ENCODE measurements at regions of chr14 and their contacts with region 1.

Region 1: DNA sequence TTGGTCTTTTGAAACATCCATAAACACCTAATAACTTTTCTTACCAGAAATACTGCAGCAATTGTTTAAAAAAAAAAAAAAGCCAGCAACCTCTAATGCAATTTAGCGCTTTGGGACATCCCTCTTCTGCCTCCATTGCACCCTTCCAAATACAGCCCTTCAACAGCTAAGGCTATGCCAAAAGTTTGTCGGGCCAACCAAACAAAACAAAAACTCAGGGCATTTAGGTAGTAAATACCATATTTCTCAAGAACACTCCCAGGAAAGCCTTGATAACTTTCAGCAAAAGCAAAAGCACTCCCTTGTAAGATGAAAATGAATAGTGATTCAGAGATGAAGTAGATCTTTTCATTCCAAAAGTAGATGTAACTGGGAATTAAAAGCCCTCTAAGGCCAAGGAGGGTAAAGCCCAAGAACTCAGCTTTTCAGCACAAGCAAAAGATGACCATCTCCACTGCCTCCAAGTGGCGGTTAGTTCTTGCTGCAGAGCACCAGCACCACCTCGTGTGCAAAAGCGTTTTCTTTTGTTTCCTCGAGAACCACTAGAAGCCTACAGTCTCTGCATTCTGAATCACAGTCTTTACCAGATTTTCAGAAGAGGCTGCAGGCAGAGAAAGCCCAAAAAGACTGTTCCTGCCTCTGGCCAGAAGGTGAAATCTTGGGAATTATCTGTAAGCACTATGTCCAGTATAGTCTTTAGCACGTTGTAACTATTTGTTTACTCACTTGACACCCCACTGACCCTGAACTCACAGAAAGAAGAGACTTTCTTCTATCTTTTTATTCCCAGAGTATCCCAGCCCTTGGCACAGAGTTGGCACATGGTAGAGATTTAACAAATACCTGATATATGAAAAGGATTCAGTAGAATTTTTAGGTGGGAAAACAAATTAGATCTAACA is 53.1 kb downstream of the SIX6 start:
- DNase-seq: peak; percentile 71
- H3K4me3 Mint-ChIP-seq: no peak overlapping the region
- H3K27ac Mint-ChIP-seq: no peak overlapping the region
- H3K4me1 Mint-ChIP-seq: no peaks in the 10 kb centered on the region
- H3K27me3 Mint-ChIP-seq: no peaks in the 10 kb centered on the region
- CTCF ChIP-seq: peak; percentile 61

Region 2: GRCh38 chr14:60064491-60065072 is 497.5 kb before region 1 on chr14:
- CTCF ChIA-PET with region 1: interaction called, 3 read pairs
- POLR2A ChIA-PET with region 1: no interaction called
- intact Hi-C with region 1: loop called (anchors 5 kb)
- DNase-seq: peak; percentile 44
- H3K4me3 Mint-ChIP-seq: no peak overlapping the region
- H3K27ac Mint-ChIP-seq: no peak overlapping the region
- H3K4me1 Mint-ChIP-seq: peaks cover 8% of the 10 kb centered on the region
- H3K27me3 Mint-ChIP-seq: no peaks in the 10 kb centered on the region
- CTCF ChIP-seq: peak; percentile 53

Region 3: DNA sequence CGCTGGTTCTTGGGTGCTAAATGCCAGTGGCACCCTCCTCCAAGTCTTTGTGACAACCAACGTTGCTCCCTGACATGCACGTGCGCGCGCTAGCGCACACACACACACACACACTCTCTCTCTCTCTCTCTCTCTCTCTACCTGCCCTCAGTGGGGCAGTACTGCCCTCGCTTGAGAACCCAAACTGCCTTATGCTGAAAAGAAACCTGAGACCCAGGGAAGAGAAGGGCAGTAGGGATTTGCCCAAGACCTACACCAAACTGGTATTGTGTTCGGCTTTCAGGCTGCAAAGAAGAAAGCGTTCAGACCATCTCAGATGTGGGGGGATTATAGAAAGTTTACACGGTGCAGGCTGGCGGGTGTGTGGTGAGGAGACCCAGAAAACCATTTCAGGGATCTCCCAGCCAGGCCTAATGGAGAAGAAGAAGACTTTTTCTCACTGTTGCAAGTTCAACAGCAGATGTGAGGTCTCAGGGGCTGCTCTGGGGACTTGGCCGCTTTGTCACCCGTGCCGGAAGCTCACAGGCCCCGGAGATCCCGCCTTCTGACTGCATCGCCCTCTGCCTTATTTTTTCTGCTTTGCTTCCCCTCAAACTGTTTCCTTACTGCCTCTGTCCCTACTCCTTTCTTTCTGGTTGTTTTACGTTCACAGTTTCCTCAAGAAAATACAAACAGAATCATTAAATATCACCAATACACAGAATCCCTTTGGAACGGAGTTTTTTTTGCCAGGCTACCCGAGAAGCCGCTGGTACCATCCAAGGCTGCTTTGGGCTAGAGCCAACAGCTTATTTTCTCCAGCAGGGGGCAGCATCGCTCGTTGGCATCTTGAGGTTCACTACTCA is 230.7 kb before region 1 on chr14:
- CTCF ChIA-PET with region 1: interaction called, 9 read pairs
- POLR2A ChIA-PET with region 1: no interaction called
- intact Hi-C with region 1: loop called (anchors 5 kb)
- DNase-seq: peak; percentile 71
- H3K4me3 Mint-ChIP-seq: peak overlapping the region; percentile 66
- H3K27ac Mint-ChIP-seq: no peak overlapping the region
- H3K4me1 Mint-ChIP-seq: peaks cover 17% of the 10 kb centered on the region
- H3K27me3 Mint-ChIP-seq: peaks cover 35% of the 10 kb centered on the region
- CTCF ChIP-seq: peak; percentile 58

Region 4: GRCh38 chr14:60488175-60488574 is 73.9 kb before region 1 on chr14:
- CTCF ChIA-PET with region 1: interaction called, 6 read pairs
- POLR2A ChIA-PET with region 1: no interaction called
- intact Hi-C with region 1: loop called (anchors 1 kb)
- DNase-seq: no peak
- H3K4me3 Mint-ChIP-seq: no peak overlapping the region
- H3K27ac Mint-ChIP-seq: no peak overlapping the region
- H3K4me1 Mint-ChIP-seq: no peaks in the 10 kb centered on the region
- H3K27me3 Mint-ChIP-seq: peaks cover 11% of the 10 kb centered on the region
- CTCF ChIP-seq: peak; percentile 20

Region 5: GRCh38 chr14:60648934-60649874 is 87.1 kb after region 1 on chr14 and contains the start of gene SIX1:
- CTCF ChIA-PET with region 1: no interaction called
- POLR2A ChIA-PET with region 1: no interaction called
- intact Hi-C with region 1: no loop called
- DNase-seq: peak; percentile 83
- H3K4me3 Mint-ChIP-seq: peak within 1 kb of the TSS; percentile 75
- H3K27ac Mint-ChIP-seq: no peak within 1 kb of the TSS
- H3K4me1 Mint-ChIP-seq: no peaks in the 10 kb centered on the region
- H3K27me3 Mint-ChIP-seq: peaks cover 11% of the 10 kb centered on the region
- CTCF ChIP-seq: no peak
- total RNA-seq, gene SIX1: 0.29 and 0.33 TPM in 2 replicates

Region 6: DNA sequence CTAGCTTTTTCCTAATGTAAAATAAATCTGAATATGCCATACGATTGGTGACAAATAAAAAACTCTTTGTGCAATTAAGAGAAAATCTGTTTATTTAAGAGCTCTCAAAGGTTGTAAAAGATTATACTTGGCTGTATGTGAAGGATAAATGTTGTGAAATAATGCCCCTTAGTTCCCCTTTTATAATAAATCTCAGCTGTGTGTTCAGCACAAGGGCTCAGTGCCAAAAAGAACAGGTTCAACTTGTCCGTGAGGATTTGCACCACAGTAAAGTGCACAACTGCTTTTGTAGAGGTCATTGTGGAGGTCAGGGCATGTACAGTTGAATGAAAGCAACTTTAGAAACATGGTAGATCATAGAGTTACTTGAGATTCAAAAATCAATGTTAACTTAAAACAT is 300.2 kb after region 1 on chr14:
- CTCF ChIA-PET with region 1: no interaction called
- POLR2A ChIA-PET with region 1: no interaction called
- intact Hi-C with region 1: no loop called
- DNase-seq: peak; percentile 11
- H3K4me3 Mint-ChIP-seq: no peak overlapping the region
- H3K27ac Mint-ChIP-seq: no peak overlapping the region
- H3K4me1 Mint-ChIP-seq: peaks cover 21% of the 10 kb centered on the region
- H3K27me3 Mint-ChIP-seq: no peaks in the 10 kb centered on the region
- CTCF ChIP-seq: no peak

Measured in MCF 10A (cell line).